Panc1 (cell line): ENCODE measurements at regions of chr9 and their contacts with region 1.

Region 1: GRCh38 chr9:127869310-127870152 is 7.9 kb downstream of the AK1 start:
- DNase-seq: peak; percentile 46
- ATAC-seq: peak; percentile 94
- H3K4me3 ChIP-seq: no peak overlapping the region
- H3K27ac ChIP-seq: no peak overlapping the region
- H3K4me1 ChIP-seq: peaks cover 10% of the 10 kb centered on the region; the same call in 1 of the 2 replicates
- H3K27me3 ChIP-seq: no peaks in the 10 kb centered on the region
- CTCF ChIP-seq: peak; percentile 90

Region 2: GRCh38 chr9:127450830-127451724 is 418.5 kb before region 1 on chr9 and contains the starts of genes LRSAM1 and RPL12:
- CTCF ChIA-PET with region 1: no interaction called
- POLR2A ChIA-PET with region 1: interaction called, 13 read pairs
- in situ Hi-C with region 1: no loop called
- intact Hi-C with region 1: no loop called
- DNase-seq: no peak
- ATAC-seq: peak; percentile 85
- H3K4me3 ChIP-seq: peak within 1 kb of the TSS; percentile 90 to 91
- H3K27ac ChIP-seq: peak within 1 kb of the TSS; percentile 93
- H3K4me1 ChIP-seq: peaks cover 20% of the 10 kb centered on the region
- H3K27me3 ChIP-seq: no peaks in the 10 kb centered on the region
- CTCF ChIP-seq: no peak
- total RNA-seq, gene LRSAM1: 15.4 TPM
- total RNA-seq, gene RPL12: 951 TPM

Region 3: DNA sequence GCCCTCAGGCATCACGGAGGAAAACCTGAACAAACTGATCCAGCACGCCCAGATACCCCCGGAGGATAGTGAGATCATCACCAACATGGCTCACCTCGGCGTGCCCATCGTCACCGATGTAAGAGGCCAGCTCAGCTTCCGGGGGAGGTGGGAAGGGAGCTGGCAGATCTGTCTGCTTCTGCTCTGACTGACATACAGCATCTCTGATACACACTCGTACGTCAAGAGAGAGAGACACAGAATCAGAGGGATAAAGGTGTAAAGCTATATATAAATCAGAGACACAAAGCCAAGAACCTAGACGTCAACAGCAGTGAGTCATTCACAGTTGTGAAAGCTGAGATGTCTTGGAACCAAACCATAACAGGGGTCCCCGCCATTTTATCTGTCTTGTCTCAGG is 192.9 kb before region 1 on chr9:
- CTCF ChIA-PET with region 1: no interaction called
- POLR2A ChIA-PET with region 1: interaction called, 12 read pairs
- in situ Hi-C with region 1: no loop called
- intact Hi-C with region 1: no loop called
- DNase-seq: no peak
- ATAC-seq: no peak
- H3K4me3 ChIP-seq: no peak overlapping the region
- H3K27ac ChIP-seq: no peak overlapping the region
- H3K4me1 ChIP-seq: no peaks in the 10 kb centered on the region
- H3K27me3 ChIP-seq: no peaks in the 10 kb centered on the region
- CTCF ChIP-seq: no peak

Region 4: GRCh38 chr9:127734747-127735529 is 134.6 kb before region 1 on chr9 and contains the start of gene TOR2A:
- CTCF ChIA-PET with region 1: interaction called, 14 read pairs
- POLR2A ChIA-PET with region 1: no interaction called
- in situ Hi-C with region 1: no loop called
- intact Hi-C with region 1: no loop called
- DNase-seq: peak; percentile 70
- ATAC-seq: peak; percentile 98
- H3K4me3 ChIP-seq: peak within 1 kb of the TSS; percentile 63 to 65
- H3K27ac ChIP-seq: peak within 1 kb of the TSS; percentile 44
- H3K4me1 ChIP-seq: no peaks in the 10 kb centered on the region
- H3K27me3 ChIP-seq: no peaks in the 10 kb centered on the region
- CTCF ChIP-seq: peak; percentile 81
- total RNA-seq, gene TOR2A: 8.2 TPM

Region 5: GRCh38 chr9:127762102-127762676 is 107.3 kb before region 1 on chr9:
- CTCF ChIA-PET with region 1: no interaction called
- POLR2A ChIA-PET with region 1: interaction called, 14 read pairs
- in situ Hi-C with region 1: no loop called
- intact Hi-C with region 1: no loop called
- DNase-seq: no peak
- ATAC-seq: no peak
- H3K4me3 ChIP-seq: no peak overlapping the region
- H3K27ac ChIP-seq: no peak overlapping the region
- H3K4me1 ChIP-seq: no peaks in the 10 kb centered on the region
- H3K27me3 ChIP-seq: no peaks in the 10 kb centered on the region
- CTCF ChIP-seq: no peak

Region 6: DNA sequence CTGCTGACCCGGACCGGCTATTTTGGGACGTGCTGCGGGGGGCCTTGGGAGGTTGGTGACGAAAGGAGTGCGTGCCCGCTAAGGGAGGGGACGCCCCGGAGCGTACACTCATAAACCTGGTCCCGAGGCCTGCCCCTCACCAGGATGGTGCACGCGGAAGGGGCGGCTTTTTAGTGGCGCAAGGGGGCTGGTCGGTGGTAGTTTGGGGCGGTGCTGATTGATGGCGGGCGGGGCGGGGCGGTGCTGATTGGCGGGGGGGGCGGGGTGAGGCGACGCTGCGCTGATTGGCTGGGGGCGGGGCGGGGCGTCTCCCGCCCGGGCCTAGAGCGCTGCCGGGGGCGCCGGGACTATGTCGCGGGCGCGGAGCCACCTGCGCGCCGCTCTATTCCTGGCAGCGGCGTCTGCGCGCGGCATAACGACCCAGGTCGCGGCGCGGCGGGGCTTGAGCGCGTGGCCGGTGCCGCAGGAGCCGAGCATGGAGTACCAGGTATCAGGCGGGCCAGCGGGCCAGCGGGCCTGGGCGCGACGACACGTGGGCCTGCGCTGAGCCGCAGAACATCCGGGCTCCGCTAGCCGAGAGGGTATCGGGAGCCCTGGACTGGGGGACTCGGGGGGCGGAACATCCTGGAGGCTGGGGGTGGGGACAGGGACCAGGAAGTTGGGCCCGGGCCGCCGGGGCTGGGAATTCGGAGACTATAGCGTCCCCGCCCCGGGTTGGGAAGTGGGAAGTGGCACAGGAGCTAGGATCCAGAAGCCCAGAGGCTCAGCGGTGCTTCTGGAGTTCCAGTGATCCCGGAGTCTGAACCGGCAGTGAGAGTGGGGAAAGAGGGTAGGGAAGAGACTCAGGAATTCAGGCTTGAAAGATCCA is 66.7 kb before region 1 on chr9 and contains the start of gene FPGS:
- CTCF ChIA-PET with region 1: interaction called, 3 read pairs
- POLR2A ChIA-PET with region 1: no interaction called
- in situ Hi-C with region 1: no loop called
- intact Hi-C with region 1: loop called (anchors 10 kb)
- DNase-seq: no peak
- ATAC-seq: peak; percentile 92
- H3K4me3 ChIP-seq: peak within 1 kb of the TSS; percentile 80 to 81
- H3K27ac ChIP-seq: peak within 1 kb of the TSS; percentile 91
- H3K4me1 ChIP-seq: peaks cover 12% of the 10 kb centered on the region
- H3K27me3 ChIP-seq: no peaks in the 10 kb centered on the region
- CTCF ChIP-seq: no peak
- total RNA-seq, gene FPGS: 56.5 TPM

Region 7: GRCh38 chr9:127847155-127847463 is 22.4 kb before region 1 on chr9:
- CTCF ChIA-PET with region 1: no interaction called
- POLR2A ChIA-PET with region 1: interaction called, 10 read pairs
- in situ Hi-C with region 1: no loop called
- intact Hi-C with region 1: no loop called
- DNase-seq: no peak
- ATAC-seq: peak; percentile 44; the same call in 1 of the 2 replicates
- H3K4me3 ChIP-seq: no peak overlapping the region
- H3K27ac ChIP-seq: no peak overlapping the region
- H3K4me1 ChIP-seq: no peaks in the 10 kb centered on the region; the same call in 1 of the 2 replicates
- H3K27me3 ChIP-seq: no peaks in the 10 kb centered on the region
- CTCF ChIP-seq: no peak

Region 8: GRCh38 chr9:127955294-127956035 is 85.9 kb after region 1 on chr9:
- CTCF ChIA-PET with region 1: no interaction called
- POLR2A ChIA-PET with region 1: no interaction called
- in situ Hi-C with region 1: no loop called
- intact Hi-C with region 1: no loop called
- DNase-seq: peak; percentile 91
- ATAC-seq: peak; percentile 82
- H3K4me3 ChIP-seq: peak overlapping the region in 1 of 2 experiments; percentile 9; a peak in 2 of 4 replicates
- H3K27ac ChIP-seq: peak overlapping the region; percentile 85
- H3K4me1 ChIP-seq: peaks cover 88% of the 10 kb centered on the region
- H3K27me3 ChIP-seq: no peaks in the 10 kb centered on the region
- CTCF ChIP-seq: no peak